HEK293 (cell line): ENCODE measurements at regions of chr17 and their contacts with region 1.

Region 1: DNA sequence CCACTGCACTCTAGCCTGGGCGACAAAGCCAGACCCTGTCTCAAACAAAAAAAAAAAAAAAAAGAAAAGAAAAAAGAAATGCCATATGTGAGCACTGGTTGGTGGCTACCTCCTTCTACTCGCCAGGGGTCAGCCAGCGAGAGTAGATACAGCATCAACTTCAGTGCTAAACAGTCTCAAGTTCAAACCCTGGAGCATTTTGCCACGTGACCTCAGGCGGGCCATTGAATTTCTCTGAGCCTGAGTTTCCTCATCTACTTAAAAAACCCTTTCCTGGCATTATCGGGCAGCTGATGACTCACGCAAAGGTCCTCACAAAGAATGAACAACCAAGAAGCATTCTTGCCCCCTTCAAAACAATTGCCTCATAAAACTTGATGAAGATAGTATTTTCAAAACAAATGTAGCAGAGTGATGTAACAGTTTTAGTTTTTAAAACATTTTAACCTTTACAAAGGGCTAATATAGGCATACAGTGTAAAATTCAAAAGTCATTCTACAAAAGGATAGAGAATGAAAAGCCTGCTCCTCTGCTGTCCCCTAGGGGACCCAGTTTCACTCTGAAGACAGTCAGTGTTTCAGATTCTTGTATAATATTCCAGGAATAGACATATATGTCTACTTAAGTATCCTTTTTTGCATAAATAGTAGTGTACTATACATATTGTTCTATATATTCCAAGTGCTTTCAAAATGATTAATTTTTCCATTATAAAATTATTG is 28.4 kb downstream of the DNAH2 start:
- H3K4me3 ChIP-seq: no peak overlapping the region
- H3K27ac ChIP-seq: no peak overlapping the region
- H3K4me1 ChIP-seq: peaks cover 22% of the 10 kb centered on the region
- CTCF ChIP-seq: no peak

Region 2: GRCh38 chr17:7727886-7728285 is 18.0 kb before region 1 on chr17:
- CTCF ChIA-PET with region 1: interaction called, 12 read pairs
- POLR2A ChIA-PET with region 1: no interaction called
- H3K4me3 ChIP-seq: no peak overlapping the region
- H3K27ac ChIP-seq: no peak overlapping the region
- H3K4me1 ChIP-seq: no peaks in the 10 kb centered on the region
- CTCF ChIP-seq: no peak

Region 3: DNA sequence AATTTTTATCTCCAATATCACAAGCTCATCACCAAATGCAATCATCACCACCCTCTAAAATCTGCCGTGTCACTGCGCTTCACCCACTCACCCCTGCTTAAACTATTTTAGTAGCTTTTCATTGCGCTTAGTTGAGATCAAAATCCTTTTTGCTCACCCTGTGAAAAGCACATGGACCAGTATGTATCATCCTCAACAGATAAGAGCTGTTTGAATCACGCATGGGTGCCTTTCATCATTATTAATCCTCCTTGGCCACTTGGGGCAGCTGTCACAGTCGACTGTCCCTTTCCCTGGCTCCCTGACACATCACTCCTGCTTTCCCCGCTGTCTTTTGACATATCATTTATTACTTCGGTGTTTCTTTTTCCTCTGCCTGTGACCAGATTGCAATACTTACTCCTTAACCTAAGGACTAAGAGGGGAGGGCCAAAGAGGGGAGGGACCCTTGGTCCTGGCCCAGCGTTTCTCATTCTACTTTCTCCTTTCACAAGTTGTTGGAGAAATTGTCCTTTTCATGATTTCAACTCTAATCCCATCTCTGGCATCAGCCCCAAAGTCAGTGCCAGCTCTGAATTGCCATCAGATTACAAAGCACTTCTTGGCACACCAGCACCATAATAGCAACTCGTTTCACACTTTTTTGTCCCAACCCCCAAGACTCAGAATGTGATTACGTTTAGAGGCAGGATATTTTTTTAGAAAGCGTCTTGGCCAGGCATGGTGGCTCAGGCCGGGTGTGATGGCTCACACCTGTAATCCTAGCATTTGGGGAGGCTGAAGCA is 79.5 kb after region 1 on chr17:
- CTCF ChIA-PET with region 1: interaction called, 40 read pairs
- POLR2A ChIA-PET with region 1: interaction called, 3 read pairs
- H3K4me3 ChIP-seq: no peak overlapping the region
- H3K27ac ChIP-seq: no peak overlapping the region
- H3K4me1 ChIP-seq: no peaks in the 10 kb centered on the region
- CTCF ChIP-seq: peak; percentile 73; the same call in 1 of the 2 replicates

Region 4: GRCh38 chr17:7856883-7857723 is 111.2 kb after region 1 on chr17 and contains the start of gene NAA38:
- CTCF ChIA-PET with region 1: interaction called, 29 read pairs
- POLR2A ChIA-PET with region 1: interaction called, 14 read pairs
- H3K4me3 ChIP-seq: peak within 1 kb of the TSS; percentile 88
- H3K27ac ChIP-seq: peak within 1 kb of the TSS; percentile 90
- H3K4me1 ChIP-seq: peaks cover 8% of the 10 kb centered on the region; the same call in 1 of the 2 replicates
- CTCF ChIP-seq: peak; percentile 97

Region 5: DNA sequence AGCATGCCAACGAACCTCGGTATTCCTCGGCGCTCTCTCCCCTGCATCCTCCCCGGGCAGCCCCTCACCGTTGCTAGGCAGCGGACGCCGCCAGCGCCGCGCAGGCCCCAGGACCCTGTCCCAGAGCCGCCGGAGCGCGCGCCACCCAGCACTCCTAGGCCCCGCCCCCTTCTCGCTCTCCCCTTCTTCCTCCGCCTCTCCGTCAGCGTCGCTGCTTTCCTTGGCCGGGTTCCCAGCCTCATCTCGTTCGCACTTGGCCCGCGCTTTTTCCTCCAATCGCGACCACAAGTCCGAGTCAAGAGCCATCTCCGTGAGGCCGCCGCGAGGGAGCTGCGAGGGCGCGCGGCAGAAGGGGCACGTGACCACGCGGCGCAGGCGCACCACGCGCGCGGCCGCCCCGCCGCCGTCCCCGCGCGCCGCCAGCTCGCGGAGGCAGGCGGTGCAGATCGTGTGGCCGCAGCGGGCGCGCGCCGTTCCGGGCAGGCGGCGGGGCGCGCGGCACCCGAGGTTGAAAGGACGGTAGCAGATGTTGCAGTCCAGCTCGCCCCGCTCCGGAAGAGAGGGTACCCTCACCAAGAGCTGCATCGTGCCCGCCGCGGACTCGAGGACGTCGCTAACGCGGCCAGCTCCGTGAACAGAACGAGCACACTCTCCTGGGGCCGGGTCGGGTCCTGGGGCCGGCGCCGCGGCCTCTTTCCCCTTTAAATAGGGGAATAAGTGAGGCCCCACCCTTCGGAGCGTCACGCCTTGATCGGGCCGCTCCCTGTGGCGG is 169.9 kb after region 1 on chr17 and contains the start of gene RNF227:
- CTCF ChIA-PET with region 1: interaction called, 14 read pairs
- POLR2A ChIA-PET with region 1: no interaction called
- H3K4me3 ChIP-seq: peak within 1 kb of the TSS; percentile 58
- H3K27ac ChIP-seq: peak within 1 kb of the TSS; percentile 90
- H3K4me1 ChIP-seq: peaks cover 14% of the 10 kb centered on the region
- CTCF ChIP-seq: no peak; the same call in 1 of the 2 replicates

Region 6: GRCh38 chr17:8016632-8017478 is 270.9 kb after region 1 on chr17:
- CTCF ChIA-PET with region 1: interaction called, 14 read pairs
- POLR2A ChIA-PET with region 1: no interaction called
- H3K4me3 ChIP-seq: peak overlapping the region; percentile 40
- H3K27ac ChIP-seq: peak overlapping the region; percentile 49; the same call in 1 of the 2 replicates
- H3K4me1 ChIP-seq: no peaks in the 10 kb centered on the region
- CTCF ChIP-seq: peak; percentile 88